ENCODE measurements at regions of chr22 and their contacts with region 1.

Region 1: GRCh38 chr22:44067033-44067432 is 42.9 kb downstream of the PARVB start:
- DNase-seq: no peak
- H3K4me3 ChIP-seq: no peak overlapping the region
- H3K27ac ChIP-seq: no peak overlapping the region
- H3K4me1 ChIP-seq: no peaks in the 10 kb centered on the region
- H3K27me3 ChIP-seq: no peaks in the 10 kb centered on the region
- CTCF ChIP-seq: no peak

Region 2: DNA sequence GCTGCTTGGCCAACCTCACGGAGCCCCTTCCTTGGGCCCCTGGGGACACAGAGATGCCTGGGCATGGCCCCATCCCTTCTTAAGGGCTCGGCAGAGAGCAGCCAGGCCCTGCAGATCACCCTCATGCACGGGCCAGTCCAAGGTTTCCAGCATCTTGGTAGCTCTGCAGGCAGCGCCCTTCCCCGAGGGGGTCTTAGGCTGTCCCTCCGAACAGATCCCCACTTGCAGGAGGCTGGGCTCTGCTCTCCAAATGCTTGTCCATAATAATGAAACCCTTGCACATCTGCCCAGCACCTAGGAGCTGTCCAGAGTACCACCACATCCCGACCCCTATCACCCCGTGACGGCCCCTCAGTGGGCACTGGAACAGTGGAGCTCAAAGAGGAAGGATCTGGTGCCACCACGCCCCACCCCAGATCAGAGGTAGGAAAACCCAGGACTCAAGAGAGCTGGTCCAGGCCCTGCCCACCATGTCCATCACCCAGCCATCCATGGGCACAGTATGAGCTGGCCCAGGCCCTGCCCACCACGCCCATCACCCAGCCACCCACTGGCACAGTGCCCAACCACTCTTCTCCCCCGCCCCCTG is 542.5 kb after region 1 on chr22:
- CTCF ChIA-PET with region 1: interaction called, 11 read pairs
- POLR2A ChIA-PET with region 1: no interaction called
- intact Hi-C with region 1: no loop called
- DNase-seq: peak in 1 of 2 experiments; percentile 29
- H3K4me3 ChIP-seq: no peak overlapping the region
- H3K27ac ChIP-seq: no peak overlapping the region
- H3K4me1 ChIP-seq: no peaks in the 10 kb centered on the region
- H3K27me3 ChIP-seq: peaks cover 41% of the 10 kb centered on the region
- CTCF ChIP-seq: no peak

Measured in PC-9 (cell line).